K562 (cell line): ENCODE measurements at regions of chr5 and their contacts with region 1.

Region 1: GRCh38 chr5:140734354-140734753 is 34.1 kb downstream of the ZMAT2 start:
- DNase-seq: peak; percentile 59 to 72 (median 64)
- ATAC-seq: peak; percentile 99
- H3K4me3 ChIP-seq: no peak overlapping the region
- H3K27ac ChIP-seq: no peak overlapping the region
- H3K4me1 ChIP-seq: no peaks in the 10 kb centered on the region
- H3K27me3 ChIP-seq: no peaks in the 10 kb centered on the region
- CTCF ChIP-seq: peak; percentile 73 to 84 (median 75)
- EP300 ChIP-seq: no peak
- POLR2A ChIP-seq: no peak
- RAD21 ChIP-seq: peak; percentile 56 to 84

Region 2: DNA sequence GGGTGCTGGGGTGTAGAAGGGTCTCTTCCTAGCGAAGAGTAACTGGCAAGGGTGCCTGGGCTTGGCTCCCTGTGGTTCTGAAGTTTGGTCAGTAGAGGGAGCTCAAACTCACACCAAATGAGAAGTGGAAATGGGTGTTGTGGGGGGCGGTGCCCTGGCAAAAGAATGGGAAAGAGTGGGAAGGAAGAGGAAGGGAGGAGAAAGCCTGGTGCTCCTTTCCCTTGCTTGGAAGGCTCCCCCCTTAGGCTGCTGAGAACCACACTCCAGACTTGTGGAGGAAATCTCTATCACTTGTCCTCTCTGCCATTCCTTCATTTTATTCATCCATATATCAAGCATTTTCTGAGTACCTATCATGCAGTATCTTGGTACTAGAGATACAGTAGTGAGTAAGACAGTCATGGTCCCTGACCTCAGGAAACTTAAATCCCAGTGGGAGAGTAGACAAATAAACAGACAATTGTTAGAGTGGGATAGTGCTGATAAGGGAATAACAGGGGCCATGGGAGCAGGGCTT is 361.3 kb before region 1 on chr5:
- CTCF ChIA-PET with region 1: interaction called, 4 read pairs
- POLR2A ChIA-PET with region 1: no interaction called
- in situ Hi-C with region 1: no loop called
- intact Hi-C with region 1: loop called (anchors 1 kb)
- DNase-seq: peak; percentile 62 to 78 (median 75)
- ATAC-seq: peak; percentile 87
- H3K4me3 ChIP-seq: no peak overlapping the region
- H3K27ac ChIP-seq: no peak overlapping the region
- H3K4me1 ChIP-seq: peaks cover 6 to 7% of the 10 kb centered on the region in 2 experiments; a peak in 2 of 5 replicates
- H3K27me3 ChIP-seq: no peaks in the 10 kb centered on the region
- CTCF ChIP-seq: peak; percentile 68 to 87 (median 80)
- EP300 ChIP-seq: no peak
- POLR2A ChIP-seq: no peak
- RAD21 ChIP-seq: peak; percentile 53 to 79